ENCODE measurements at regions of chr17 and their contacts with region 1.

Region 1: DNA sequence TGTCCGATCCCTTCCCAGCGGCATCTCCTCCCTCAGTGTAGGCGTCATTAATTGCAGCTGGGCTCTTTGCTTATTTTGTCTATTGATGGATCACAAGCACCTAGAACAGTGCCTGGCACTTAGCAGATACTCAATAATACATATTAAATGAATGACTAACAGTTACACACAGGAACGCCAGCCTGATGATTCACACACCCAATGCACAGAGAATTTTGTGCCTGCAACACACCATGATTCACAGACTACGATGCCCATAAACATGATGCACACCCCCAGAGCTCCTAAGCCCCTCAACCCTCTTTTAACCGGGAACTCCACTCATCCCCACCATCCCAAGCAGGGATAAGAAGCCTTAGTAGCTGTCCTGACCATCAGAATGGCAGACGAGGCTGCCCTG is 66.6 kb upstream of the TMEM97 start:
- DNase-seq: no peak
- ATAC-seq: no peak
- H3K4me3 Mint-ChIP-seq: no peak overlapping the region
- H3K27ac Mint-ChIP-seq: no peak overlapping the region
- H3K4me1 Mint-ChIP-seq: peaks cover 5% of the 10 kb centered on the region; the same call in 1 of the 2 replicates
- H3K27me3 Mint-ChIP-seq: peaks cover 8% of the 10 kb centered on the region
- CTCF ChIP-seq: no peak

Region 2: GRCh38 chr17:27805520-27806146 is 446.8 kb before region 1 on chr17:
- CTCF ChIA-PET with region 1: interaction called, 23 read pairs
- POLR2A ChIA-PET with region 1: no interaction called
- DNase-seq: peak; percentile 91
- ATAC-seq: peak; percentile 89
- H3K4me3 Mint-ChIP-seq: peak overlapping the region; percentile 51
- H3K27ac Mint-ChIP-seq: no peak overlapping the region
- H3K4me1 Mint-ChIP-seq: peaks cover 23% of the 10 kb centered on the region
- H3K27me3 Mint-ChIP-seq: no peaks in the 10 kb centered on the region
- CTCF ChIP-seq: peak; percentile 74

Region 3: DNA sequence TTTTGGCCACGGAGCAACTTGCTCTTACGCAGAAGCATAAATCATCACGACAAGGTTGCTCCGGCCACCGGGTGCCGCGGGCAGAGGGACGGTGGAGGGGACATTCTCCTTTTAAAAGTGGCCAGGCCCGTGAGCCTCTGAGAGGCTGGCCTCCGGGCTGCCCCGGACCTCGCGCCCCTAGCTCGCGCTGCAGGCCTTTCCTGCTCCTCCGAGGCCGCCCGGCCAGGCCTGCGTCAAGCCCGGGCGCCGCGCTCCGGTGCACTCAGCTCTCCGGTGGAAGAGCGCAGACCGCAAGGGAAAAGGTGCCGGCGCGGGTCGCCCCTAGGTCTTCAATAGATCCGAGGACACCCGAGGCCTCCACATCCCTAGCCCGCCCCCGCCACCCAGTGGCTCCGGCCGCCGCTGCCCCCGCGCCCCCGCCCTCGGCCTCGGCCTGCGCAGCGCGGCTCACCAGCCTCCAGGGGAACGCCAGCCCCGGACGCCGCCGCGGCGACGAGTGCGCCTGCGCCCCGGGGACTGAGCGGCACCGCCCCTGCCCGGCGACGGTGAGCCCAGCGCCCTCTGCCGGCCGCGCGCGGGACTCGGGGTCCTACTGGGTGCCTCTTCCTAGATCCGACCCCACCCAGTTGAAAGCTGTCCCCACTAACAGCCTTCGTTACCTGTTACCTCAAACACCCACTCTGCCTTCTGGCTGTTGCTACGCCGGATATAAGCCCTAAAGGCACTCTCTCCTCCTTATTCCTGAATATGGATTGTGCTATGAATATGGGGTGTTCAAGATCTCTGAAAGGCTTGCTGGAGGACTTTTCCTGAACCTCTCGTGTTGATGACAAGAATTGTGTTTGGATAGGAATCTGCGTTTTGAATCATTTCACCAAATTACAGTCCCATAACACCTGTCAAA is 359.3 kb before region 1 on chr17 and contains the start of gene LYRM9:
- CTCF ChIA-PET with region 1: interaction called, 19 read pairs
- POLR2A ChIA-PET with region 1: no interaction called
- DNase-seq: peak; percentile 95
- ATAC-seq: peak; percentile 90
- H3K4me3 Mint-ChIP-seq: peak within 1 kb of the TSS; percentile 61
- H3K27ac Mint-ChIP-seq: peak within 1 kb of the TSS; percentile 6; the same call in 1 of the 2 replicates
- H3K4me1 Mint-ChIP-seq: peaks cover 74% of the 10 kb centered on the region
- H3K27me3 Mint-ChIP-seq: peaks cover 10% of the 10 kb centered on the region
- CTCF ChIP-seq: peak; percentile 71; the same call in 1 of the 2 replicates
- total RNA-seq, gene LYRM9: 3.6 to 4.1 TPM (median 3.8 TPM) in 3 replicates

Region 4: DNA sequence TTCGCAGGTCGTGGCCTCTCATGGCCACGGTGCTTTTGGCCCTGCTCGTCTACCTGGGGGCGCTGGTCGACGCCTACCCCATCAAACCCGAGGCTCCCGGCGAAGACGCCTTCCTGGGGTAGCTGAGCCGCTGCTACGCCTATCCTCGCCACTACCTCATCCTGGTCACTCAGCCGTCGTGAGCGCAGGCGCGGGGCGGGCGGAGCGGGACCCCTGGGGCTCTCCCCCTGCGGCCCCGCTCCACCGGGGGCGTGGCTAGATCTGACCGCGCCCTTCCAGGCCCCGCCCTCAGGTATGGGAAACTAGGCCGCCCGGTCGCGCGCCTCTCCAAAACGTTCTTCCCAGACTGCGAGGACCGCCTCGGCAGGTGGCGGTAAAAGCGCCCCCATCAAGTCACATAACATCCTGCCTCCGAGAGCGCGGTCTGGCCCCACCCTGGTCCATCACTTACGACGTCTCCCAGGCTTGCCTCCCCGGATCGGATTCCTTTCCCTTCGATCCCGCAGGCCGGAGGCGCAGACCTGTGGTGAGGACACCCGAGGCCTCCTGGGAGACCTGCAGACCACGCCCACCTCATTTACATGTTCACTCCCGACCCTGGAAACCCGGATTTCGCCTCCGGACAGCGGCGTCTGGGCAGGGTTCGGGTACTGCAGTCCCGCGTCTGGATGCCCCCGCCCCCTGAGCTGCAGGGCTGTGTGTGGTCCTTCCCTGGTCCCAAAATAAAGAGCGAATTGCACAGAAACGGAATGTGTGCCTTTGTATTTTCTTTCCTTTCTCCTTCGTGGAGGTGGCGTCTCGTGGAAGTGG is 24.9 kb before region 1 on chr17:
- CTCF ChIA-PET with region 1: interaction called, 45 read pairs
- POLR2A ChIA-PET with region 1: no interaction called
- DNase-seq: peak; percentile 98
- ATAC-seq: peak; percentile 92
- H3K4me3 Mint-ChIP-seq: peak overlapping the region; percentile 97
- H3K27ac Mint-ChIP-seq: peak overlapping the region; percentile 98
- H3K4me1 Mint-ChIP-seq: peaks cover 21% of the 10 kb centered on the region
- H3K27me3 Mint-ChIP-seq: peaks cover 4% of the 10 kb centered on the region; the same call in 1 of the 2 replicates
- CTCF ChIP-seq: no peak

Region 5: DNA sequence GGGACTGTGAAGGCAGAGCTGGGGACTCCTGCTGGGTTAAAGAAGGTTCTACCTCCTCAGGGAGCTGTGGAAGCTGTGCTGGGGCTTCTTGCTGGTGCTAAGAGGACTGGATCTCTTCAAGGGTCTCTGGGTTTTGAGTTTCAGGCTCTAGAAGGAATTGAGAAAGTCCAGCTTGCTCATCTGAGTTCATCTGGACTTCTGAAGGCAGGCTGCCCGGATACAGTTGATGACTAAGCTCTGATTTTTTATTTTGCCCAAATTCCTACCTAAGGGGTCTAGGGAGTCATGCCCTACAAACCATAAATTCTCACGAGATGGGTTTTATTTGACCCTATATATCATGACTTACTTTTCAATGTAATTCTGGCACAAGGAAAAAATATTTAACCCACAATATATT is 19.7 kb after region 1 on chr17:
- CTCF ChIA-PET with region 1: interaction called, 13 read pairs
- POLR2A ChIA-PET with region 1: no interaction called
- DNase-seq: no peak
- ATAC-seq: no peak
- H3K4me3 Mint-ChIP-seq: no peak overlapping the region
- H3K27ac Mint-ChIP-seq: no peak overlapping the region
- H3K4me1 Mint-ChIP-seq: peaks cover 11% of the 10 kb centered on the region
- H3K27me3 Mint-ChIP-seq: peaks cover 8% of the 10 kb centered on the region
- CTCF ChIP-seq: no peak

Region 6: DNA sequence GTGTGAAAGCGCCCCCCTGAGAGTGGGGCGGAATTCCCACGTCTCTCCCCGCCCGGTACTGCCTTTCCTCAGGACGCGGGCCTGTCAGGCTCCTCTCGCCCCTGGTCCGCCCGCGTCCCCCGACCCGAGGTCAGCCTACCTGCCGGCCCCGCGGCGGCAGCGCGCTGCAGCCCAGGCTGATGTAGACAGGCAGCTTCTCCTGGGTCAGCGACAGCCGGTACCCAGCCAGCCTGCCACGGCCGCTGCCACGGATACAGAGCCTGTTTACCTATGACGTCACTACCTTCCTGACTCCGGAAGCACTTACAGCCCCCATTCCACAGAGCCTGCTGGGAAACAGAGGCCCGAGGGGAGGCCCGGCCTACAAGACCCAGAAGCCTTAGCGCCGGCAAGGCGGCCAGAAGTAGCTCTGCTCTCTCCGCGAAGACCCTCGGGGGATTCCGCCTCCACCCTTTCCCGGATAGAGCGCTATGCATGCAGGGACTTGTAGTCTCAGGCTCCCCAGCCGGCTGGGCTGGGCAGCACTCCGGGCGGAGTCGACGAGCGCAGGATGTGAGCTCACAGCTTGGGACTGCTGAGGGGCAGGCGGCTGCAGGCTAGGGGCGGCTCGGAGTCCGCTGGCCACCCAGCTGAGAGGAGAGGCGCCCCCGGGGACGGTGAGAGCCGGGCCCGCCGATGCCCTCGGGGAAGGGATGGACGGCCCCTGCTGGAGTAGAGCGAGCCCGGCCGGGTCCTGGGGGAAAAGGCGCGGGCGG is 82.9 kb after region 1 on chr17 and contains the starts of genes IFT20 and TNFAIP1:
- CTCF ChIA-PET with region 1: interaction called, 21 read pairs
- POLR2A ChIA-PET with region 1: interaction called, 3 read pairs
- DNase-seq: peak; percentile 99
- ATAC-seq: peak; percentile 97
- H3K4me3 Mint-ChIP-seq: peak within 1 kb of the TSS; percentile 99
- H3K27ac Mint-ChIP-seq: peak within 1 kb of the TSS; percentile 99
- H3K4me1 Mint-ChIP-seq: peaks cover 20% of the 10 kb centered on the region
- H3K27me3 Mint-ChIP-seq: no peaks in the 10 kb centered on the region
- CTCF ChIP-seq: no peak
- total RNA-seq, gene IFT20: 17.6 to 19.3 TPM (median 18.3 TPM) in 3 replicates
- total RNA-seq, gene TNFAIP1: 16.9 to 21.3 TPM (median 17.1 TPM) in 3 replicates

Region 7: GRCh38 chr17:28398280-28398981 is 146.0 kb after region 1 on chr17:
- CTCF ChIA-PET with region 1: no interaction called
- POLR2A ChIA-PET with region 1: no interaction called
- DNase-seq: no peak
- ATAC-seq: no peak
- H3K4me3 Mint-ChIP-seq: no peak overlapping the region
- H3K27ac Mint-ChIP-seq: no peak overlapping the region
- H3K4me1 Mint-ChIP-seq: peaks cover 27% of the 10 kb centered on the region
- H3K27me3 Mint-ChIP-seq: peaks cover 18% of the 10 kb centered on the region
- CTCF ChIP-seq: no peak

Measured in WTC11 (cell line).